Esophagus muscularis mucosa (tissue), 4 donors: ENCODE measurements at regions of chr15 and their contacts with region 1.

Region 1: GRCh38 chr15:85794603-85795336 is at the start of gene KLHL25:
- DNase-seq: peak; percentile 97
- H3K4me3 ChIP-seq: peak within 1 kb of the TSS; percentile 81 to 96 (median 92)
- H3K27ac ChIP-seq: peak within 1 kb of the TSS; percentile 88 to 97 (median 94)
- H3K4me1 ChIP-seq: peaks cover 13 to 38% (median 23%) of the 10 kb centered on the region in 4 donors
- H3K27me3 ChIP-seq: no peaks in the 10 kb centered on the region
- CTCF ChIP-seq: no peak
- EP300 ChIP-seq: no peak
- POLR2A ChIP-seq: peak; percentile 9
- total RNA-seq, gene KLHL25: 10.8 to 24.4 (median 12.0) TPM

Region 2: GRCh38 chr15:85749261-85750151 is 45.3 kb before region 1 on chr15:
- intact Hi-C with region 1: loop called (anchors 5 kb)
- DNase-seq: no peak
- H3K4me3 ChIP-seq: peak overlapping the region; percentile 9 to 41 (median 36)
- H3K27ac ChIP-seq: peak overlapping the region; percentile 78 to 85 (median 81)
- H3K4me1 ChIP-seq: peaks cover 47 to 70% (median 60%) of the 10 kb centered on the region in 4 donors
- H3K27me3 ChIP-seq: no peaks in the 10 kb centered on the region
- CTCF ChIP-seq: no peak
- EP300 ChIP-seq: no peak
- POLR2A ChIP-seq: no peak

Region 3: GRCh38 chr15:86700864-86701619 is 906.3 kb after region 1 on chr15:
- intact Hi-C with region 1: no loop called
- DNase-seq: no peak
- H3K4me3 ChIP-seq: no peak overlapping the region
- H3K27ac ChIP-seq: no peak overlapping the region
- H3K4me1 ChIP-seq: peaks cover 0 to 8% (median 0%) of the 10 kb centered on the region in 4 donors
- H3K27me3 ChIP-seq: no peaks in the 10 kb centered on the region
- CTCF ChIP-seq: no peak
- EP300 ChIP-seq: no peak
- POLR2A ChIP-seq: no peak